ENCODE measurements at regions of chr3 and their contacts with region 1.

Region 1: GRCh38 chr3:149640976-149641728 is 16.7 kb downstream of the WWTR1 start:
- DNase-seq: no peak
- H3K4me3 ChIP-seq: no peak overlapping the region
- H3K27ac ChIP-seq: peak overlapping the region; percentile 40 to 60 (median 44)
- H3K4me1 ChIP-seq: peaks cover 48 to 98% (median 95%) of the 10 kb centered on the region in 4 donors
- H3K27me3 ChIP-seq: no peaks in the 10 kb centered on the region
- CTCF ChIP-seq: no peak
- EP300 ChIP-seq: no peak
- POLR2A ChIP-seq: no peak

Region 2: DNA sequence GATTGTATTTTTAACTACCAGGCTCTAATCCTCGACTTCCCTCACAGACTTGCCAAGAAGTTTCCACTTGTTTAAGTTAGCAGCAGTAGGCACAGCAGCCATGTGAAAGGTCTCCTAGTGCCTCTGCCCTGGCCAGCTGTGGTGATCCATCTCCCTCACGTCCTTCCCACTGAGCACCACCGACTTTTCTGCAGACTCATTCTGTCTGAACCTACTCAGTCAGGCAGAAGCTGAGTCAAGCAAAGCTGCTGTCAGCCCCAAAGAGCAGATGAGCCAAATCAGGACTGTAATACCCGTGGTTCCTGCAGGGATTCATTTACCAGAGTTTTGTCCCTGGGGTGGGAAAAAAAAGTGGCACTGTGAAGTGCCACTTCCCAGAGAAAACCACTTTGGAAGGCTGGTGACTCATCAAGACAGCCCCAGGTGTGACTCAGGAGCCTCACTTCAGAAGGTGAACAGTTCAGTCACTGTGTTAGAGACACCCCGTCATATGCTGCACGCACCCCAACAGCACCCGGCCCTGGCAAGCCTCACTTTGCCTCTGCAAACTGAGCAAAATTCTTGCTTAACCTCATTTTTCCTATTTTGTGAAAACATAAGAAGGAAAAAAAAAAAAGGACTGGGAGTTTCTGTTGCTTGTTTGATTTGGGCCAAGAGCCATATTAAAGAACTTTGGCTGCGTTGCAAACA is 59.3 kb before region 1 on chr3:
- intact Hi-C with region 1: loop called (anchors 5 kb)
- DNase-seq: no peak
- H3K4me3 ChIP-seq: no peak overlapping the region
- H3K27ac ChIP-seq: peak overlapping the region; percentile 29 to 84 (median 57)
- H3K4me1 ChIP-seq: peaks cover 55 to 99% (median 93%) of the 10 kb centered on the region in 4 donors
- H3K27me3 ChIP-seq: no peaks in the 10 kb centered on the region
- CTCF ChIP-seq: peak in 1 of 3 experiments; percentile 2
- EP300 ChIP-seq: no peak
- POLR2A ChIP-seq: no peak

Region 3: DNA sequence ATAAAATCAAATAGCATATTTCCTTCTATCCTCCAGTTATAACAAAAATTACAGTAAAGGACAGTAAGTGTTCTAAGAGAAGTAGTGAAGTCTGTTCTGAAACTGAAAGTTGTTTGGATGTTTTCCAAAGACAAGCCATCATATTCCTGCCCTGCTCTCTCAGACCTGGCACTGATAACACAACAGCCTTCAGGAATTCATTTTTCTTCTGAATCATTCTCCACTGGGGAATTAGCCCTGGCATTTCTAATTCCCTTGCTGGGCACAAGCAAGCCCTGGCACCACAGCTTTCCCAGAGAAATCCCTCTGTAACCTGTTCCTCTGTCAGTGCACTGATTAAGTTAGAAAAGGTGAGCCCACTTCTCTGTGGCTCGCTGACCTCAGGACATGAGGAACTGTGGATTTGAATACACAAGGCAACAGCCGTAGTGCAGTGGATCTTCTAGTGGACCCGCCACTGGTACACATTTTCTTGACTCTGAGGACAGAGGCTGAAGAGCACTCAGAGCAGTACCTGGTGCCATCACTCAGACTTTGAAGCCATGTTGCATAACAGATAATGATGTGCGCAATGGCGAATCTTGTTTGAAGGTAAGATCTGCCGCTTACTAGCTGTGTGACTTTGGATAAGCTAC is 44.9 kb before region 1 on chr3:
- intact Hi-C with region 1: no loop called
- DNase-seq: no peak
- H3K4me3 ChIP-seq: no peak overlapping the region
- H3K27ac ChIP-seq: peak overlapping the region in 2 of 4 donors; percentile 27 to 41
- H3K4me1 ChIP-seq: peaks cover 27 to 79% (median 57%) of the 10 kb centered on the region in 4 donors
- H3K27me3 ChIP-seq: no peaks in the 10 kb centered on the region
- CTCF ChIP-seq: no peak
- EP300 ChIP-seq: no peak
- POLR2A ChIP-seq: no peak